Activated CD4-positive, alpha-beta memory T cell treated with anti-CD3 and anti-CD28 coated beads, Interleukin-2, amount 10 ng/mL, durations not matched to agents 7 days and 5 days (primary cell): ENCODE measurements at regions of chr18 and their contacts with region 1.

Region 1: DNA sequence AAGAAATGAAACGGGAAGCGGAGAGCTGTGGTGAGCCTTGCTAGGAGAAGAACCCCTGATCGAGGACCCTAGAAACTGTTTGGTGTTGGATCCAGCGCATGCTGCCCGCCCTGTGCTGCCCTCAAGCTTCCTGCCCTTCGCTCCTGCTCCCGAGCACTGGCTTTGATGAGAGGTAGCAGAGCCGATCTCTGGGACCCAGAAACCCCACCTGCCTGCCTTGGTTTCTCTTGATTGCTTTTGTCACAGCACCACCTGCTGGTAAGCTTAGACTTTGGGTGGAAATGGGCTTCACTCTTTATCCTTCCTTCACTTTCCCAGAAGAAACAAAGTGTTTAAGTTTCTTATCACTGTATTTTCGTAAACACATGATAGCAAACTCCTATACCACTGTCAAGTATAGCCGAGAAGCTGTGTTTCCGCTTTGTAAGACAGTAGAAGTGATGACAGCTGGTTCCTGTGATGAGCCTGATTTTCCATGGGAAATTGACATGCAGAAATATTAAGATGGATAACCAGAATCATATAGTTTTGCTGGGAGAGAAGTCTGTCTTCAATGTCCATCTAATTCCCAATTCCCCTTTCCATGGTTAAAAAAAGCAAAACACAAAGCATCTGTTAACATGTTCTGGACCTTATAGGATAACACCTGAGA is 267.4 kb downstream of the PHLPP1 start:
- DNase-seq: peak; percentile 59
- H3K4me3 Mint-ChIP-seq: no peak overlapping the region
- H3K27ac Mint-ChIP-seq: no peak overlapping the region
- H3K4me1 Mint-ChIP-seq: peaks cover 7% of the 10 kb centered on the region
- H3K27me3 Mint-ChIP-seq: no peaks in the 10 kb centered on the region

Region 2: DNA sequence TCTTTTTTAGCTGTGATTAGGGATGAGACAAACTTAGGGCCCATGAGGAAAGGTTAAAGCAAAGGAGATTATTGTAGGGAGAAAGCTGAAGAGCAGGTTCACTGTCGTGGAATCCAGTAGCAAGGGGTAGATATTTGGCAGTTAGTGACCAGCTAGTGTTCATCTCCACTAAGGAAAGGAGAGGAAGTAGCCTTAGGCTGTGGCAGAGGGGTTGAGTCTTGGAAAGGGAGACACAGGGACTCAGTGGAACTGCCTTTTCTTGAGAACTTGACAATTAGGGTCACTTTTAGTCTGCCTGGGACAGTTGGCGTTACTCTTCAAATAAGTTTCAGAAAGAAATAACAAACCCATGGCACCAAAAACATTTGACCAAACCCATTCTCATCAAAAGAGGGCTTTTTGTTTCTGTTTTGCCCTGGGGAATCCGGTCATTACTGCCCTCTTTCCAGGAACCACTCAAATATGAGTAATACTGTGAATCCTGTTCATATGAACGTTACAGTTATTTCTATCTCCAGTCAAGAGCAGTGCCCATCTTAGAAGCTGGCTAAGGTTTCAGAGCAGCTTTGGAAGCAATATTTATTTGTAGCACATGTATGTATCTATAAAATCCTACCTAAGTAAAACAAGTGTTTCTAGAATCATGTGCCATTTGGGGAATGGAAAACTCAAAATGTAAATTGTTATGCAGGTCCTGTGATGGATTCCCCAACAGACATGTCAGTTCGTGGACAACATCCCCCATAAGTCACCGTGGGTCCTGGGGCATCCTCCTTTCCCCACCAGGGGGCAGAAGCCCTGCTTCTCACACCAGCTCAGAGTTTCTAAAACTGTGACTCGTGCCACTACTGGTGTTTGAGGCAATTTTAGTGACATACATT is 344.7 kb before region 1 on chr18:
- CTCF ChIA-PET with region 1: interaction called, 18 read pairs
- POLR2A ChIA-PET with region 1: no interaction called
- DNase-seq: peak; percentile 63
- H3K4me3 Mint-ChIP-seq: no peak overlapping the region
- H3K27ac Mint-ChIP-seq: peak overlapping the region; percentile 38
- H3K4me1 Mint-ChIP-seq: peaks cover 27% of the 10 kb centered on the region
- H3K27me3 Mint-ChIP-seq: peaks cover 17% of the 10 kb centered on the region

Region 3: DNA sequence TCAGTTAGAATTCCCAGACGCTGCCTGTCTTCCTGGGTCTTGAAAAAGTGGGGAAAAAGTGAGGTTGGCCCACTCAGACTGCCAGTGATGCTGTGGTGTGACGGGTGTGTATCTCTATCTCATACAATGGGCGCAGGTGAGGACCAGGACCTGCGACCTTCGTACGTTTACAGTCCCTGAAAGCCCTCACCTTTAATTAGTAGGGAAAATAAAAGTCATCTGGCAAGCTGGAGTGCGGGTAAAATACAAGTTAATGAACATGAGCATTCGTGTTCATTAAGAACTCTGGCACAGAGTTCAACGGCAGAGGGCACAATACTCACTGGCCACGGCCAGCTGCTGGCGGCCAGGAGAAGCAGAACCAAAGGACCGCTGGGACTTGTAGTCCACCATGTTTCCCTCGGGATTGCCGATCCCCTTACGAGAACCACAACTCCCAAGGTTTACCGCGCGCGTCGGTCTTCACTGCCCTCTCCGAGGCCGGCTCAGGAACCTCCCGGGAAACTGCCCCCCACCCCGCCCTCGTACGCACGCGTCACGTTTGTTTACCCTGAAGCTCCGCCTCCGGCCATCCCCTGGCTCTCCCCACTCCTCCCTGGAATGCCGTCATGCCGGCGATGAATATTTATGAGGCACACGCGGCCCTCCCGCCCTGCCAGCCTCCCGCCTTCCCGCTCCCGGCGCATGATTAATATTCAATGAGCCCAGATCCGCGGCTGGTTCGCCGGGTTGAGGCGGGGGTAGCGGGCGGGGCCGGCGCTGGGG is 267.9 kb before region 1 on chr18:
- CTCF ChIA-PET with region 1: interaction called, 48 read pairs
- POLR2A ChIA-PET with region 1: interaction called, 4 read pairs
- DNase-seq: peak; percentile 91
- H3K4me3 Mint-ChIP-seq: peak overlapping the region; percentile 86
- H3K27ac Mint-ChIP-seq: peak overlapping the region; percentile 80
- H3K4me1 Mint-ChIP-seq: peaks cover 34% of the 10 kb centered on the region
- H3K27me3 Mint-ChIP-seq: peaks cover 20% of the 10 kb centered on the region

Region 4: GRCh38 chr18:62957885-62958472 is 24.7 kb before region 1 on chr18:
- CTCF ChIA-PET with region 1: interaction called, 17 read pairs
- POLR2A ChIA-PET with region 1: no interaction called
- DNase-seq: peak; percentile 62
- H3K4me3 Mint-ChIP-seq: no peak overlapping the region
- H3K27ac Mint-ChIP-seq: no peak overlapping the region
- H3K4me1 Mint-ChIP-seq: peaks cover 14% of the 10 kb centered on the region
- H3K27me3 Mint-ChIP-seq: no peaks in the 10 kb centered on the region